BJ (cell line): ENCODE measurements at regions of chr7 and their contacts with region 1.

Region 1: DNA sequence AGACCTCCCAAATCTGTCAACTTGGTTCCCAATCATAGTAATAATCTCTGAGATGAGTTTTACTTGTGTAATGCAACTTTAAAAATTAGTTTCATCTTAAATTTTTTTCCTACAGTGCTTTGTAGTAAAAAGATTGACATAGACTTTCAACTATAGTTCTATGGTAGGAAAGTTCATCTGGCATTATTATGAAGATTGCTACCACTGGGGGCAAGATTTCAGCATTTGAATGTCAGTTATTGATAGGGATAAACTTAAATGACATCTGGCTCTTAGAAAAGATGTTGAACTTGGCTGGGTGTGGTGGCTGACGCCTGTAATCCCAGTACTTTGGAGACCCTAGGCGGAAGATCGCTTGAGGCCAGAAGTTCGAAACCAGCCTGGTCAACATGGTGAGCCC is 1.4 kb upstream of the TRA2A start:
- DNase-seq: no peak
- H3K4me3 ChIP-seq: no peak overlapping the region
- H3K27me3 ChIP-seq: no peaks in the 10 kb centered on the region
- CTCF ChIP-seq: no peak

Region 2: GRCh38 chr7:23418046-23418445 is 115.1 kb before region 1 on chr7:
- CTCF ChIA-PET with region 1: no interaction called
- POLR2A ChIA-PET with region 1: no interaction called
- DNase-seq: no peak
- H3K4me3 ChIP-seq: no peak overlapping the region
- H3K27me3 ChIP-seq: no peaks in the 10 kb centered on the region
- CTCF ChIP-seq: no peak

Region 3: GRCh38 chr7:23546897-23547572 is 13.9 kb after region 1 on chr7:
- CTCF ChIA-PET with region 1: interaction called, 14 read pairs
- POLR2A ChIA-PET with region 1: no interaction called
- DNase-seq: peak; percentile 62
- H3K4me3 ChIP-seq: no peak overlapping the region
- H3K27me3 ChIP-seq: no peaks in the 10 kb centered on the region
- CTCF ChIP-seq: peak; percentile 94